ENCODE measurements at regions of chr6 and their contacts with region 1.

Region 1: GRCh38 chr6:28923318-28924102 is at the start of gene TRIM27:
- DNase-seq: peak; percentile 84
- H3K4me3 Mint-ChIP-seq: peak within 1 kb of the TSS; percentile 77
- H3K27ac Mint-ChIP-seq: peak within 1 kb of the TSS; percentile 94
- H3K4me1 Mint-ChIP-seq: peaks cover 39% of the 10 kb centered on the region
- H3K27me3 Mint-ChIP-seq: no peaks in the 10 kb centered on the region
- total RNA-seq, gene TRIM27: 56.8 to 58.0 TPM

Region 2: GRCh38 chr6:28648035-28648877 is 275.3 kb before region 1 on chr6:
- CTCF ChIA-PET with region 1: no interaction called
- POLR2A ChIA-PET with region 1: no interaction called
- DNase-seq: peak; percentile 42
- H3K4me3 Mint-ChIP-seq: peak overlapping the region; percentile 79
- H3K27ac Mint-ChIP-seq: no peak overlapping the region
- H3K4me1 Mint-ChIP-seq: peaks cover 14% of the 10 kb centered on the region
- H3K27me3 Mint-ChIP-seq: peaks cover 43% of the 10 kb centered on the region

Region 3: DNA sequence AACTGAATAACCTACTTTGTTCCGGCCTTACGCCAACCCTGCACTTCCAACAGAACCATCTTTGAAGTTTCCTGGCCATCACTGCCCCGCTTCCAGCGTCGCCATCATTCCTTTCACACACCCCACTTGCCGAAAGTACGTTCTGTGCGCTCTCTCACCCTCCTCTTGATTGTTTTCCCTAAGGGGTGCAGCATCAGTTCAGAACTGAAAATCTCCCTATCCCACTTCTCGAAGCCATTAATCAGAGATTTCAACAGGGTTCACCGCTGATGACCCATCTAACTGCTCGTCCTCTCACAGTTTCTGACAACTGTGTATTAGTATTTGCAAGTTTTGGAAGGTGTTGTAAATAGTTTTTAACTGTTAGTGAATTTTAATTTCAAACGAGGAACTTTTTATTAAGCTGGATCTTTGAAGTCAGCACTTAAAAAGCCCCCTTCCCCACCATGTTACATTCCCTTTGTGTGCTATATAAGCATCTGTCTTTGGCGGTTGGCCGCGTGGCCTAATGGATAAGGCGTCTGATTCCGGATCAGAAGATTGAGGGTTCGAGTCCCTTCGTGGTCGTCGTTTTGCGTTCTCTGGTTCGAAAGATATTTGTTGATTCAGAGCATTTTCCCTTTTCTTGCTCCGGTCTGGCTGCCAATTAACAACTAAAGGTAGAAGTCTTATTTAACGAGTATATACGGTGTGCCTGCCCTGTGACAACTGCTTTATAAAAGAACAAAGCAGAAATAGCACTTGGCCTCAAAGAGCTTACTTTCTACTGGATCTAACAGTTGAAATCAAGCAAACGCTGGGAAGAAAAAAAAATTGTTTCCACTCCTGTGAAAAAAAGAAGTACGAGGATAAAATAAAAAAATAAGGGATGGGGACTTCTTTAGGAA is 42.4 kb before region 1 on chr6:
- CTCF ChIA-PET with region 1: interaction called, 3 read pairs
- POLR2A ChIA-PET with region 1: interaction called, 39 read pairs
- DNase-seq: peak; percentile 57
- H3K4me3 Mint-ChIP-seq: peak overlapping the region; percentile 53
- H3K27ac Mint-ChIP-seq: peak overlapping the region; percentile 29
- H3K4me1 Mint-ChIP-seq: peaks cover 35% of the 10 kb centered on the region
- H3K27me3 Mint-ChIP-seq: peaks cover 43% of the 10 kb centered on the region

Region 4: DNA sequence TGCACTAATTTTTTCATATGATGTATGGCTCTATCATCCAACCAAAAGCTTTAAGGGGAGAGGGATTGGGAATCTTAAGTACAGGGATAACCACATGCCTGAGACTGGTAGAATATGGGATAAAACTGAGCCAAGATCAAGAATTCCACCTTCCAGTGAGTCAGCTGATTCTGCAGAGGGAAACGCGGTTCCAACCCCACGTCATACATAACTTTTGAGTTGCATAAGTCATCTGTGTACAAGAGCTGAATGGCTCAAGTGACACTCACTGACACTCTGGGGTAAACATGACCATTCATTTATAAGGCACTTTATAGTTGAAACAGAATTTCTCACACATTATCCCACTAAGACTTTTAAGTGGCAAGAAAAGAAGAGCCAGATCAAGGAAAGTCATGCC is 16.1 kb before region 1 on chr6:
- CTCF ChIA-PET with region 1: no interaction called
- POLR2A ChIA-PET with region 1: interaction called, 38 read pairs
- DNase-seq: no peak
- H3K4me3 Mint-ChIP-seq: no peak overlapping the region
- H3K27ac Mint-ChIP-seq: no peak overlapping the region
- H3K4me1 Mint-ChIP-seq: no peaks in the 10 kb centered on the region
- H3K27me3 Mint-ChIP-seq: no peaks in the 10 kb centered on the region

Region 5: DNA sequence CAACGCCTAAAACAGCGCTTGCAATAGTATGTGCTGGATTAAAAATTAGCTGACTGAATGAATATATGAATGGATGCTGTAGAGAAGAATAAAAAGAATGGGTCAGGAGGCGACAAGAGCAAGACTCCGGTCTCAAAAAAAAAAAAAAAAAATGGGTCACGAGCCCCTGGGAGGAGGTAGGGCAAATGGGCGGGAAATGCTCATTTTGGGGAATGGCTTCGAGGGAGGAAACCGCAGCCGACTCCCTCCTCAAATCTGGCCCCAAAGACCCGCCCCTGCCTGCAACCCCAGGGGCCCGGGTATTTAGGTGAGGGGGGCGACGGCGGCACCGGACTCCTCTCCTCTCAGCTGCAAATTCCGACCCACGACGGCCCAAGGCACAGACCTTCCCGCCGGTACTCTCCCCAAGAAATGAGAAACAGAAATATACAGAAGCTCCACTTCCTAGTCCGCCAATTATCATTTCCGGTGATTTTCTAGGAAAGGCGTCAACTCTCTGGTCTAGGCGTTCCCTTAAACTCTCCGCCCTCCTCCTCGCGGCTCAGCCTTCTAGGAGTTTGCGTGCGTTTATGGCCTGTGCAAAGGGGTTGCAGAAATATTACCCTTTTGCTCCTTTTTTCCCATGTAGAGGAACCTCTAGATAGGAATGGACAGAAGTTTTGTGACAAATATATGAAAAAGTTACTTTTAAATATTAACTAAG is 81.8 kb after region 1 on chr6 and contains the start of gene ZNF311:
- CTCF ChIA-PET with region 1: no interaction called
- POLR2A ChIA-PET with region 1: interaction called, 10 read pairs
- DNase-seq: peak; percentile 61
- H3K4me3 Mint-ChIP-seq: peak within 1 kb of the TSS; percentile 80
- H3K27ac Mint-ChIP-seq: peak within 1 kb of the TSS; percentile 84
- H3K4me1 Mint-ChIP-seq: peaks cover 27% of the 10 kb centered on the region
- H3K27me3 Mint-ChIP-seq: peaks cover 5% of the 10 kb centered on the region
- total RNA-seq, gene ZNF311: 0.53 to 0.65 TPM